OCI-LY7 (cell line): ENCODE measurements at regions of chr3 and their contacts with region 1.

Region 1: DNA sequence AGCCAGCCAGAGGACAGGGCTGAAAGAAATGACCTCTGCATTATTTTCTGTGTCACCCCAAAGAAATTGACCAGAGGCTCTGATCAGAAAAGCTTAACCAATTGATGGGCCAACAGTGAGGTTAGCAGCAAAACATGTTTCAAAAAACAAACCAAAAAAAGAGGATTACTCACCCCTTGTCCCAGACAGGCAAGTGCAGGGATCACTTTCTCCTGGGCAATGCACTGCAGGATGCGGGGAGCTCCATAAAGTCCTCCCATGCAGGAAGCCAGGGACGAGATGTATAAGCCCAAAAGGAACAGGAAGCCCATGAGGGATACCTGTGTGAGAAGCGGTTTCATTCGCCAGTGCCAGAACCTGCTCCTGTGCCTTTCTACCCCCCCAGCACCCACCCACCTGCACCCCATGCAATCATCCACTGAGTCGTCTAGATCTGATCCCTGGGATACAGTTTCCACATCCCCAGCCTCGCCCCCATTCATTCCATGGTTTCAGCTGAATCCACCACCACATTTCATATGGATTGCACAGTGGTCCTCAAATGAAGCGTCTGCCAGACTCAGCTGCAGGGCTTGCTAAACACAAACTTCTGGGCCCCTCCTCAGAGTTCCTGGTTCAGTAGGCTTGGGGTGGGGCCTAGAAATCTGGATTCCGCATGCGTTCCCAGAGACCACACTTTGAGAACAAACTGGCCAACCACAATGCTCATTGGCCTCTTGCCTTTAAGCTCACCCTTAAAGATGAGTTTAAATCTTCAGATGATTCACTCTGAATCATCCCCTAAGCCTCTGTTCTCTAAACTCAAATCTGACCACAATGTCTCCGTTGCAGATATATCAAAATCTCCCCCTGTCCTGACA is 54.4 kb upstream of the HEG1 start:
- DNase-seq: no peak
- H3K4me3 ChIP-seq: no peak overlapping the region
- H3K27ac ChIP-seq: no peak overlapping the region
- H3K4me1 ChIP-seq: peaks cover 6% of the 10 kb centered on the region
- CTCF ChIP-seq: no peak

Region 2: DNA sequence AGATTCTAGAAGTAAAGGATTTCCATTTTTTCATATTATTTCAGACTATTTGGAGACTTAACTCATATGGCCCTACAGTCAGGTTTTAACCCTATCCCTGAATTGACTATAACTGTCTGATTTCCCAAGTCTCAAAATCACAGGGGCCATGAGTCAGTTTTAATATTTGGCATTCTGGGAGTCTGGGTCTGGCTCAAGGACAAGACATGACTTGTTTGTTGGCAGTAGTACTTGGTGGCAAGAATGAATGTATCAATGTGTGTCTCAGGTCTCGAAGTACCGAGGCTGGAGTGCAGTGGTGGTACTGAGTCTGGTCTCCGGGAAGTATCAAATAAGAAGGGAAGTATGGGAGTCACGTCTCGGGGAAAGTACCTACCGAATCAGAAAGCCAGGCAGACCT is 369.2 kb before region 1 on chr3:
- CTCF ChIA-PET with region 1: no interaction called
- POLR2A ChIA-PET with region 1: no interaction called
- intact Hi-C with region 1: no loop called
- DNase-seq: no peak
- H3K4me3 ChIP-seq: no peak overlapping the region
- H3K27ac ChIP-seq: no peak overlapping the region
- H3K4me1 ChIP-seq: peaks cover 5% of the 10 kb centered on the region
- CTCF ChIP-seq: no peak

Region 3: GRCh38 chr3:125098611-125099291 is 11.5 kb before region 1 on chr3:
- CTCF ChIA-PET with region 1: no interaction called
- POLR2A ChIA-PET with region 1: interaction called, 12 read pairs
- intact Hi-C with region 1: no loop called
- DNase-seq: no peak
- H3K4me3 ChIP-seq: no peak overlapping the region
- H3K27ac ChIP-seq: no peak overlapping the region
- H3K4me1 ChIP-seq: no peaks in the 10 kb centered on the region
- CTCF ChIP-seq: no peak